ENCODE measurements at regions of chr1 and their contacts with region 1.

Region 1: GRCh38 chr1:103156966-103157365 is 48.6 kb upstream of the COL11A1 start:
- DNase-seq: no peak
- ATAC-seq: no peak
- H3K4me3 ChIP-seq: no peak overlapping the region
- H3K4me3 Mint-ChIP-seq: no peak overlapping the region
- H3K27ac ChIP-seq: no peak overlapping the region
- H3K27ac Mint-ChIP-seq: no peak overlapping the region
- H3K4me1 ChIP-seq: no peaks in the 10 kb centered on the region
- H3K4me1 Mint-ChIP-seq: no peaks in the 10 kb centered on the region
- H3K27me3 ChIP-seq: no peaks in the 10 kb centered on the region
- H3K27me3 Mint-ChIP-seq: no peaks in the 10 kb centered on the region
- CTCF ChIP-seq: no peak

Region 2: GRCh38 chr1:103198076-103198475 is 41.1 kb after region 1 on chr1:
- CTCF ChIA-PET with region 1: no interaction called
- POLR2A ChIA-PET with region 1: no interaction called
- intact Hi-C with region 1: loop called in 1 of 2 experiments (anchors 1 kb)
- DNase-seq: no peak
- ATAC-seq: no peak
- H3K4me3 ChIP-seq: no peak overlapping the region
- H3K4me3 Mint-ChIP-seq: no peak overlapping the region
- H3K27ac ChIP-seq: no peak overlapping the region
- H3K27ac Mint-ChIP-seq: no peak overlapping the region
- H3K4me1 ChIP-seq: no peaks in the 10 kb centered on the region
- H3K4me1 Mint-ChIP-seq: no peaks in the 10 kb centered on the region
- H3K27me3 ChIP-seq: no peaks in the 10 kb centered on the region
- H3K27me3 Mint-ChIP-seq: no peaks in the 10 kb centered on the region
- CTCF ChIP-seq: no peak